Heart left ventricle (tissue), 16 donors: ENCODE measurements at regions of chr2 and their contacts with region 1.

Region 1: DNA sequence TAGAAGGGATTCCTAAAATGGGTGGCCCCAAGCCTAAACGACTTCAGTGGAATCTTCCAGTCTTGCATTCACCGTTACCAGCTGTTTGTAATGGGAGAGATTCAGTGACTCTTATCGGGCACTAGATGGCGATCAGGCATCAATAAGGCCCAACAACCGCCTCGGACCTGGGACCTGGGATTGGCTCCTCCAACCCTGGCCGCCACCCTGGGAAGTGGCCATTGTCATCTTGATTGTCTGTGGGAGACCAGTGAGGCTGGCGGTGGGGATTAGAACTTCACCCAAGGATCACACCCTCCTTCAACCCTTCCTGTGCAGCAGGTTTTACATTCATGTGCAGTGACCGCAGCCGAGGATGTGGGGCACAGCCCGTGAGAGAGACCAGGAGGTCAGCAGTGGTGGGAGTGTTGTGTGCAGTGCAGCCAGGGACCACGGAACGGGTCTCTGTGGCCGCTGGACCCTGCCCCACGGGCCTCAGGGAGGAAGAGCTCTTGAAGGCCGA is 85.3 kb downstream of the SPP2 start:
- DNase-seq: peak; percentile 22 to 67 (median 35)
- ATAC-seq: peak; percentile 47 to 83 (median 70)
- H3K4me3 ChIP-seq: no peak overlapping the region
- H3K27ac ChIP-seq: no peak overlapping the region
- H3K4me1 ChIP-seq: no peaks in the 10 kb centered on the region
- H3K27me3 ChIP-seq: peaks cover 0 to 26% (median 4%) of the 10 kb centered on the region in 9 donors
- CTCF ChIP-seq: peak; percentile 54 to 82 (median 71)
- POLR2A ChIP-seq: no peak

Region 2: GRCh38 chr2:233674995-233675394 is 460.8 kb before region 1 on chr2:
- intact Hi-C with region 1: no loop called
- DNase-seq: no peak
- ATAC-seq: no peak
- H3K4me3 ChIP-seq: no peak overlapping the region
- H3K27ac ChIP-seq: no peak overlapping the region
- H3K4me1 ChIP-seq: no peaks in the 10 kb centered on the region
- H3K27me3 ChIP-seq: peaks cover 0 to 21% (median 0%) of the 10 kb centered on the region in 9 donors
- CTCF ChIP-seq: no peak
- POLR2A ChIP-seq: no peak

Region 3: GRCh38 chr2:234288974-234289455 is 153.2 kb after region 1 on chr2:
- intact Hi-C with region 1: loop called in 4 of 10 experiments (anchors 5 to 10 kb)
- DNase-seq: peak; percentile 53 to 75 (median 57)
- ATAC-seq: peak in 3 of 4 donors; percentile 38 to 54 (median 38)
- H3K4me3 ChIP-seq: no peak overlapping the region
- H3K27ac ChIP-seq: peak overlapping the region in 1 of 12 donors; percentile 87
- H3K4me1 ChIP-seq: peaks cover 0 to 62% (median 10%) of the 10 kb centered on the region in 12 donors
- H3K27me3 ChIP-seq: no peaks in the 10 kb centered on the region
- CTCF ChIP-seq: peak; percentile 65 to 80 (median 72)
- POLR2A ChIP-seq: no peak

Region 4: GRCh38 chr2:234544659-234545611 is 409.2 kb after region 1 on chr2:
- intact Hi-C with region 1: loop called in 9 of 10 experiments (anchors 1 to 10 kb)
- DNase-seq: peak; percentile 49 to 84 (median 54)
- ATAC-seq: peak; percentile 51 to 72 (median 62)
- H3K4me3 ChIP-seq: no peak overlapping the region
- H3K27ac ChIP-seq: no peak overlapping the region
- H3K4me1 ChIP-seq: peaks cover 0 to 6% (median 0%) of the 10 kb centered on the region in 12 donors
- H3K27me3 ChIP-seq: peaks cover 0 to 16% (median 0%) of the 10 kb centered on the region in 9 donors
- CTCF ChIP-seq: peak; percentile 79 to 96 (median 92)
- POLR2A ChIP-seq: no peak

Region 5: DNA sequence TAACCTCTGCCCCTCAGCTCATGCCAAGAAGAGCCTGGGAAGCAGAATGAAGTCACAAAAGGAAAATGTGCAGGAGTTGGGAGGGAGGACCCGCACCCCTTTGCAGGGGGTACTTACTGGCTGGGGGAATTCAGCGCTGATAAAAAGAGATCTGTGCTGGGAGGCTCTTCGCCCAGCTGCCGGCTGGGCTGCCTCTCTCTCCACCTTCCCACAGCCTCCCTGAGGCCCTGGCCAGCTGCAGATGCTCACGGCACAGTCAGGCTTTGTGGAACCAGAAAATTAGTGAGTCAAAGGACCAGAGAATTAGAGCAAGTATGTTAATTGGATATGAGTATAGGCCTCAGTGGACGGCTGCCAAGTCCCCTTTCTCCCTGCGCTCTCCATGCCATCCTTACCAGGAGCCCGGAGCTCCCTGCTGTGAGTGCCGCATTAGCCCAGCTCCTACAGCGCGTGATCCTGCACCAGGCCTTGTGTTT is 634.3 kb after region 1 on chr2:
- intact Hi-C with region 1: no loop called
- DNase-seq: peak in 4 of 5 donors; percentile 32 to 59 (median 50)
- ATAC-seq: peak in 3 of 4 donors; percentile 64 to 83 (median 71)
- H3K4me3 ChIP-seq: no peak overlapping the region
- H3K27ac ChIP-seq: peak overlapping the region in 1 of 12 donors; percentile 30
- H3K4me1 ChIP-seq: peaks cover 0 to 7% (median 0%) of the 10 kb centered on the region in 12 donors
- H3K27me3 ChIP-seq: no peaks in the 10 kb centered on the region
- CTCF ChIP-seq: no peak
- POLR2A ChIP-seq: no peak

Region 6: DNA sequence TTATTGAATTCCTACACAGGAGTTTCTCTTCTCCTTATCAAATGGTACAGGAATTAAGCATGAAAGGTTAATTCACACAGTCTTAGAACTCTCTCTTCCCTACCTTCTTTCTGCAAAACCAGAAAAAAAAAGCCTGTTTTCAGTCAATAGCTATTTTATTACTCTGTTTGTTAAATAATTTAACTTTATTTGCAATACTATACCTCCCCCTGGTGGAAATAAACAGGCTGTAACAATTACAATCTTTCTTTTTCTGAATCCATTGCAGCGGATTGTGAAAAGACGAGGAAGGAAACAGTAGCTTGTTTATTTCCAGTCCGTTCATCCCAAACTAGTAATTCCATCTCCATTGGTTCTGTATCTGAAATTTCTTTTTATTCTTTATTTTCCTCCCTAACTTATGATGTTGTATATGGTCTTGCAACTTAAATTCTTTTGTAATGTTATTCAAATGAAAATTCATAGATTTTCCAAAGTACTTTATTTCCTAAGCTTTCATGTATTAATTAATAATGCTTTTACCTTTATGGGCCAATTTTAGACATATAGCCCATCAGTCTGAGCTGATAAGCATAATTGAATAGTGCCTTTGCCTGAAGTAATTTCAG is 981.2 kb after region 1 on chr2:
- intact Hi-C with region 1: loop called in 6 of 10 experiments (anchors 5 to 10 kb)
- DNase-seq: no peak
- ATAC-seq: no peak
- H3K4me3 ChIP-seq: no peak overlapping the region
- H3K27ac ChIP-seq: no peak overlapping the region
- H3K4me1 ChIP-seq: no peaks in the 10 kb centered on the region
- H3K27me3 ChIP-seq: peaks cover 0 to 10% (median 0%) of the 10 kb centered on the region in 9 donors
- CTCF ChIP-seq: peak; percentile 64 to 83 (median 71)
- POLR2A ChIP-seq: no peak